Aorta (tissue), 5 donors: ENCODE measurements at regions of chrX and their contacts with region 1.

Region 1: GRCh38 chrX:103629318-103630170 is 769 bp downstream of the TCEAL1 start:
- DNase-seq: peak; percentile 76 to 86
- ATAC-seq: peak; percentile 93
- H3K4me3 ChIP-seq: peak overlapping the region; percentile 44 to 92
- H3K27ac ChIP-seq: peak overlapping the region; percentile 47 to 88
- H3K4me1 ChIP-seq: no peaks in the 10 kb centered on the region
- H3K27me3 ChIP-seq: no peaks in the 10 kb centered on the region

Region 2: DNA sequence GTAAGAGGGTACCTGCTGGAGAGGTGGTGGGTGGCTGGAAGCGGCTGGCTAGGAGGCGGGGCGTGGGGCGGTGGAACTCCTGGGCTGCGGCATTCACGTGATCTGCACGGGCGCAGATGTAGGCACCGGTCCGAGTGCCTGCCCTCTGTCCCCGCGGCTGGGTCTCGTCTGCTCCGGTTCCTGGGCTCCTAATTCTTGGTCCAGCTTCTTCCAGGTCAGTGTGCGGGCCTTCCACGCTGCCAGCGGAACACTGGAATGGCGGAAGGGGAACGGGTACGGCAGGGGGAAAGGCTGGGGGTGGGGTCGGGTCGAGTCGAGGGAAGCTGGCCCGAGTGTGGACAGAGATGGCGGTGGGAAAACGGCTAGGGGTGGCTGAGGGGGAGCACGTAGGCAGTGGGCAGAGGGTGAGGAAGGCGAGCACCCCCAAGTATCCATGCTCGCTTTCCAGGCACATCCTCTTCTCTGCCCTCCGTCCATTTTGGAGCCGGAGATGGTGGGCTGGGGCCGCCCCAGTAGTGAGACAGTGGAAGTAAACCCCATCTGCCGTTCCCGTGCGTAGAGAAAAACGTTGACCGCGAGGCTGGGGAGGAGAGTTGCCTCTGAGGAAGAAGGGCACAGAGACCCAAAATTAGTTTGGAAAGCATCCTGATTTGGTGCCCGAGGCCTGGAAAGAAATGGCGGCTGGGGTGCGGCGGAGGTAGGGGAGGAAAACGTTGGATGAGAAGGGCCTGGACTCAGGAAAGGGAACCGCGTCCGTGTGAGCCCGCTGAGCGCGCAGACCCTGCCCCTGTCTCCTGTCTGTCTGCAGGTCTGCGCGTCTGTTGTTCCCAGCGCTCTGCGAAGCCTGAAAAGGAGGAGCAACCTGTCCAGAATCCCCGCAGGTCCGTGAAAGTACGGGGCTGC is 43.9 kb before region 1 on chrX and contains the start of gene TCEAL4:
- intact Hi-C with region 1: loop called in 1 of 2 experiments (anchors 2 kb)
- DNase-seq: peak; percentile 76 to 86
- ATAC-seq: peak; percentile 91
- H3K4me3 ChIP-seq: peak within 1 kb of the TSS; percentile 14 to 35
- H3K27ac ChIP-seq: peak within 1 kb of the TSS in 1 of 2 donors; percentile 62
- H3K4me1 ChIP-seq: no peaks in the 10 kb centered on the region
- H3K27me3 ChIP-seq: no peaks in the 10 kb centered on the region
- total RNA-seq, gene TCEAL4: 97.2 to 187 TPM